Esophagus muscularis mucosa (tissue), 4 donors: ENCODE measurements at regions of chr3 and their contacts with region 1.

Region 1: GRCh38 chr3:45210308-45211041 is 15.6 kb downstream of the TMEM158 start:
- DNase-seq: no peak
- H3K4me3 ChIP-seq: no peak overlapping the region
- H3K27ac ChIP-seq: peak overlapping the region in 3 of 4 donors; percentile 28 to 54 (median 48)
- H3K4me1 ChIP-seq: peaks cover 0 to 31% (median 30%) of the 10 kb centered on the region in 4 donors
- H3K27me3 ChIP-seq: no peaks in the 10 kb centered on the region
- CTCF ChIP-seq: peak; percentile 85 to 89 (median 87)
- EP300 ChIP-seq: no peak
- POLR2A ChIP-seq: no peak

Region 2: DNA sequence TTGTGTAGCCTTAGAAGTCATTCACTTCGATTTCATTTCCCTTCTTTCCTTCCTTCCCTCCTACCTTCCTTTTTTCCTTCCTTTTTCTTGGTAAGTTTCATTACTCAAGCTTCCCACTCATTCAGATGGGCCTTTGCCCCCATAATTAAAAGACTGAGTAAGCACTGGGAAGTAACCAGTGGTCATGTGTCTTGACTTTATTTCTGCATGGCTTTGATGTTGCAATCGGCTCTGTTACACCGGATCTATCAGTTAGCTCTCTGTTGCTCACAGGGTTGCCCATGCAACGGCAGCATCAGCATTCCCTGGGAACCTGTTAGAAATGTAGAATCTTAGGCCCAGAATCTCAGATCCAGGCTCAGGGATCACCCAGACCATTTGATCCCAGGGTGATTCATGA is 152.3 kb after region 1 on chr3:
- intact Hi-C with region 1: no loop called
- DNase-seq: no peak
- H3K4me3 ChIP-seq: no peak overlapping the region
- H3K27ac ChIP-seq: no peak overlapping the region
- H3K4me1 ChIP-seq: peaks cover 0 to 4% (median 0%) of the 10 kb centered on the region in 4 donors
- H3K27me3 ChIP-seq: no peaks in the 10 kb centered on the region
- CTCF ChIP-seq: no peak
- EP300 ChIP-seq: no peak
- POLR2A ChIP-seq: no peak

Region 3: GRCh38 chr3:45499529-45499928 is 289.1 kb after region 1 on chr3:
- intact Hi-C with region 1: loop called (anchors 5 kb)
- DNase-seq: no peak
- H3K4me3 ChIP-seq: no peak overlapping the region
- H3K27ac ChIP-seq: no peak overlapping the region
- H3K4me1 ChIP-seq: peaks cover 0 to 16% (median 2%) of the 10 kb centered on the region in 4 donors
- H3K27me3 ChIP-seq: no peaks in the 10 kb centered on the region
- CTCF ChIP-seq: peak; percentile 44 to 53 (median 51)
- EP300 ChIP-seq: no peak
- POLR2A ChIP-seq: no peak